Body of pancreas (tissue), 4 donors: ENCODE measurements at regions of chr10 and their contacts with region 1.

Region 1: DNA sequence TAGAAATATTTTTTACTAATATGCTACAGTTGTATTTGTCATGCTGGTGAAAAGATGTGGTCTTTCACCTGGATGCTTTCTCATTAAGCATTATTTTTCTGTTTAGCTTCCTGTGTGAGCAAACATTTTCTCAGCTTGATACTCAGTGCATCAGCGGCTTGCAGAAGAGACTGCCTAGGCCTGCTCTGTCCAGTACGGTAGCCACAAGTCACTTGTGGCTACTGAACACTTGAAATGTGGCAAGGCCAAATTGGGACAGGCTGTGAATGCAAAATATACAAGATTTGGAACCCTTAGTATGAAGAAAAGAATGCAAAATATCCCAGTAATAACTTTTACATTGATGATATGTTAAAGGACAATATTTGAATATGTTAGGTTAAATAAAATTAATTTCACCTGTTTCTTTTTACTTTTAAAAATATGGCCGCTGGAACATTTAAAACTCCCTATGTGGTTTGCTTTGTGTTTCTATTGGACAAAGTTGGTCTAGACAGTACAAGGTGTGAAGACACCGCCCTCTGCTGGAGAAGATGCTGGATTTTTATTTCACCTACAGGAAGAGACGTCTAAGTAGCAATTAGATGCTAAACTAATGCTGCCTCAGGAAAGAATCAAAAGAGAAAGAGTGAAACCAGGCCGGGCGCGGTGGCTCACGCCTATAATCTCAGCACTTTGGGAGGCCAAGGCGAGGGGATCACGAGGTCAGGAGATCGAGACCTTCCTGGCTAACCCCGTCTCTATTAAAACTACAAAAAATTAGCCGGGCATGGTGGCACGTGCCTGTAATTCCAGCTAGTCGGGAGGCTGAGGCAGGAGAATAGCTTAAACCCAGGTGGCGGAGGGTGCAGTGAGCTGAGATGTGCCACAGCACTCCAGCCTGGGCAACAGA is 5.3 kb downstream of the SRGN start:
- DNase-seq: peak; percentile 83 to 93 (median 86)
- ATAC-seq: peak; percentile 85
- H3K4me3 ChIP-seq: no peak overlapping the region
- H3K27ac ChIP-seq: peak overlapping the region in 1 of 4 donors; percentile 2
- H3K4me1 ChIP-seq: peaks cover 5% of the 10 kb centered on the region
- H3K27me3 ChIP-seq: no peaks in the 10 kb centered on the region
- CTCF ChIP-seq: peak; percentile 49 to 86 (median 81)
- POLR2A ChIP-seq: no peak

Region 2: GRCh38 chr10:69004821-69005220 is 88.4 kb before region 1 on chr10:
- intact Hi-C with region 1: loop called (anchors 10 kb)
- DNase-seq: no peak
- ATAC-seq: no peak
- H3K4me3 ChIP-seq: no peak overlapping the region
- H3K27ac ChIP-seq: no peak overlapping the region
- H3K4me1 ChIP-seq: no peaks in the 10 kb centered on the region
- H3K27me3 ChIP-seq: no peaks in the 10 kb centered on the region
- CTCF ChIP-seq: peak in 5 of 7 experiments; percentile 9 to 43 (median 28)
- POLR2A ChIP-seq: no peak

Region 3: DNA sequence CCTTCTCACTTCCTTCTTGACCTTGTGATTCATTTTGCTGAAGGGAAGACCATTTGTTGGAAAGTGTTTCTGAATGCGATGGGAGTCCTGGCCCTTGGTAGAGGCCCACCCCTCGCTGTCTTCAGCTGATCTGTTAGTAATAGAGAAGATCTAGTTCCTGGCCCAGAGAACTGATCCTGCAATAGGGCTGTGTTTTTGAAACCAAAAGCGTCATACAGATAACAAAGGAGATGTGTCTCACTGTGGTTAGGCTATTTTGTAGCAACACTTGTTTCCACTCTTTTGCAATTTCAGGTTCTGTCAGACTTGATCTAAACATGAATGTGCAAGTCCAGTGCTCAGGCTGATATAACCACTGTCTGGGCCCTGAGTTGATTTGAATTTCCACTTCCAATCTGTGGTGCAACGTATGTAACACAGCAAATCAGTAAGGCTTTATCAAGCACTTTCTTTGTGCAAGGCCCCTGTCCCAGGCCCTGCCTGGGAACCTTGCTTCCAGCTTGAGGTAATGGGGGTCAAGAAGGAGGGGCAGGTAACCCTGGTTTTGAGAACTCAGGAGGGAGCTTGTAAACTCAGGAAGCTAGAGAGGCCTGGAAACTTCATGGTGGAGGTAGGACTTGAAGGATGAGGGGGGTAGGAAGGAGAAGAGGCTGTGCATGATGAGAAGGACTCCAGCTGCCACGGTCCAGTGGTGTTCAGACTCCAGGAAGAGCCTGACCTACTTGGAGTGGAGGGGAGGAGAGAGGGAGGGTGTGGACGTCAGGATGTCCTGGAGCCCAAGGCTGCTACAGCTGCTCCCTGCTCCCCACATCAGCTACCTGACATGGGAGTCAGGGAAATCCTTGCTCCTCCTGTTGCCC is 47.5 kb before region 1 on chr10:
- intact Hi-C with region 1: no loop called
- DNase-seq: peak in 1 of 4 donors; percentile 45
- ATAC-seq: no peak
- H3K4me3 ChIP-seq: no peak overlapping the region
- H3K27ac ChIP-seq: peak overlapping the region in 2 of 4 donors; percentile 50 to 72
- H3K4me1 ChIP-seq: no peaks in the 10 kb centered on the region
- H3K27me3 ChIP-seq: no peaks in the 10 kb centered on the region
- CTCF ChIP-seq: no peak
- POLR2A ChIP-seq: no peak